Activated CD8-positive, alpha-beta T cell treated with anti-CD3 and anti-CD28 coated beads for 36 hours (primary cell): ENCODE measurements at regions of chr21 and their contacts with region 1.

Region 1: DNA sequence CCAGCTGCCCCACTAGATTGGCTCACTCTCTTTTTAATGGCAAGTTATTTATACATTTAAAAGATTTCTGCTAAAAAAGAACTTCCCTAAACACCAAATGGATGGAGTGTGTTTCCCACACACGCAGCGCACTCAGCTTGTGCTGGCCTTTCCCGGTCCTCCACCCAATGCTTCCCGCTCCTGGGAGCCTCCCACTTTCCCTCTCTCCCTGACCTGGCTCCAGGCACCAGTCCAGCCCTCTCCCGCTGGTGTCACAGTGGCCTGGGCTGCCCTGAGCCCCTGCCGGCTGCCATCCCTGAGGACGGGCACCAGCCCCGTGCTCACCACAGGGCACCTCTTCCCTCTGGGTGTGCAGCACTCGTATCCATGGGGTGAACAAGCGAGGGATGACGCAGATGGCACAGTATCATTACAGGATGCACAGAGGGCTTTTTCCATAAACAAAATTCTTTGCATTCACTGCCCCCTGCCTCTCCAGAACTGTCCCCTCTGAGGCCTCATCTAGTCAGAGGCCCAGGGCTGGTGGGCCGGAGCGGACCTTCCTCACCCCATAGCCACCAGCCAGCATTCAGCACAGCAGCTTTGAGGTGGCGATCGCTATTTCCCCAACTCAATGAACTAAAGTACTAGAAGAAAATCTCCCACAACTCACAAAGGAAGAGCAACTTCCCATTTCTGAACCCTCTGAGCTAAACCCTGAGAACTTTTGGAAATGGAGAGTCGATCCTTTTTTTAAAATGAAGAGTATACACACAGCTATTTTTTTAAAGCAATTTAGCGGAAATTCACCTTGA is 68.5 kb downstream of the SLC37A1 start:
- DNase-seq: no peak
- ATAC-seq: no peak
- H3K4me3 Mint-ChIP-seq: no peak overlapping the region
- H3K27ac Mint-ChIP-seq: no peak overlapping the region
- H3K4me1 Mint-ChIP-seq: no peaks in the 10 kb centered on the region
- H3K27me3 Mint-ChIP-seq: no peaks in the 10 kb centered on the region
- CTCF ChIP-seq: no peak

Region 2: DNA sequence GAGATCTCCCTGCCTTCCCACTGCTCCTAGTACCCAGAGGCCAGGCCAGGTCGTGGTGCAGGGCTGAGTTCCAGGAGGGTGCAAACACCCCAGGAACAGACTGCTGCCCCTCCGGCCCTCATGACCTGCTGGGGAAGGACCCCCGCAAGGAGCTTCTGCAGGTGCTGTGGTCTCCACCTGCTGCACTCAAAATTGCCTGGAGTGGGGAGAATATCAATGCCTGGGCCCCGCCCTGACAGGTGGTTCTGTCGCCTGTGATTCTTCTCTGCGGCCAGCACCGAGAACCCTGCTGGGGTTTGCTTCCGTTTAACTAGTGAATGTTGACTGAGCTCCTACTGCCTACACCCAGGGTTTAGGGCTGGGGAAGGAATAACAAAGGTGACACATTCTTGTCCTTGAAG is 264.8 kb before region 1 on chr21:
- CTCF ChIA-PET with region 1: no interaction called
- POLR2A ChIA-PET with region 1: no interaction called
- intact Hi-C with region 1: no loop called
- DNase-seq: no peak
- ATAC-seq: no peak
- H3K4me3 Mint-ChIP-seq: no peak overlapping the region
- H3K27ac Mint-ChIP-seq: no peak overlapping the region
- H3K4me1 Mint-ChIP-seq: peaks cover 5% of the 10 kb centered on the region
- H3K27me3 Mint-ChIP-seq: no peaks in the 10 kb centered on the region
- CTCF ChIP-seq: no peak

Region 3: DNA sequence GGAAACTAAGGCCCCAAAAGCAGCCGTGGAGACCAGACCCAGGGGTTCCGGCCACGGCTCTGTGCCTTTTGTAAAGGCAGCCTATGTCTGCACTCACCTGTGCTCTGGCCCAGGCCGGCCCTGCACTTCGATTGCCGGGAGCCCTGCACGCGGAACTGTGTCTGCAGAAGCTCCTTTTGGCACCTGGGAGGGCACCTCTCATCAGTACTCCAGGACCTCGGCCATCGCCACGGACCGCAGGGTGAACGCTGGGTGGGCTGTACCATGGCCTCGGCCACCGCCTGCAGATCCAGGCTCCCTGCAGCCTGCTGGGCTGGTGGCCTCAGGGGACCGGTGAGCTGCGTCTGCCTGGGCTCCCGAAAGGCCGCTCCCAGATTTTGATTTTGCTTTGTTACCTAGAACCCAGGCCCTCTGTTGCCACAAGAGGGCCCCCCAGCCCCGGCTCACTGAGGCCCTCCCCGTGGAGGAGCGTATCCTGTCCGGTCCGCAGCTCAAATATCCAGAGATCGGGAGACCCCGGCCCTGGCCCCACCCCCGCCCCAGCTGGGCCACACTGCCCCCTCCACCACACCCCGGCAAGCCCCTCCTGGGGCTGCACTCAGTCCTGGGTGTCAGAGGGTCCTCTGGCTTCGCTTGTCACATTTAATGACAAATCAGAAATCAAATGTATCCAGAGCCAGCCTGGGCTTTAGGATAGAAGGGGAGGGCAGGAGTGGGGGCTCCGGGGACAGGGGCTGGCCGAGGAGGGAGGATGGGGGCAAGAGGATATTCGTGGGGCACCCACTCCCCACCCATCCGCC is 11.0 kb after region 1 on chr21:
- CTCF ChIA-PET with region 1: interaction called, 28 read pairs
- POLR2A ChIA-PET with region 1: no interaction called
- intact Hi-C with region 1: no loop called
- DNase-seq: peak; percentile 81
- ATAC-seq: peak; percentile 86
- H3K4me3 Mint-ChIP-seq: no peak overlapping the region
- H3K27ac Mint-ChIP-seq: no peak overlapping the region
- H3K4me1 Mint-ChIP-seq: peaks cover 17% of the 10 kb centered on the region
- H3K27me3 Mint-ChIP-seq: no peaks in the 10 kb centered on the region
- CTCF ChIP-seq: peak; percentile 79